ENCODE measurements at regions of chr12 and their contacts with region 1.

Region 1: GRCh38 chr12:26266881-26267280 is 71.5 kb downstream of the SSPN start:
- DNase-seq: no peak
- H3K4me3 ChIP-seq: no peak overlapping the region
- H3K27ac ChIP-seq: no peak overlapping the region
- H3K4me1 ChIP-seq: peaks cover 4% of the 10 kb centered on the region
- H3K27me3 ChIP-seq: peaks cover 2 to 3% of the 10 kb centered on the region in 2 experiments
- CTCF ChIP-seq: no peak
- POLR2A ChIP-seq: no peak

Region 2: GRCh38 chr12:26425587-26426260 is 158.8 kb after region 1 on chr12:
- CTCF ChIA-PET with region 1: no interaction called
- POLR2A ChIA-PET with region 1: no interaction called
- dilution Hi-C with region 1: no loop called
- intact Hi-C with region 1: loop called (anchors 1 kb)
- DNase-seq: peak; percentile 66
- H3K4me3 ChIP-seq: no peak overlapping the region
- H3K27ac ChIP-seq: no peak overlapping the region
- H3K4me1 ChIP-seq: peaks cover 11% of the 10 kb centered on the region
- H3K27me3 ChIP-seq: no peaks in the 10 kb centered on the region
- CTCF ChIP-seq: no peak
- POLR2A ChIP-seq: no peak

Measured in endothelial cell of umbilical vein (primary cell).